ENCODE measurements at regions of chr12 and their contacts with region 1.

Region 1: GRCh38 chr12:76621582-76622024 is 62.0 kb upstream of the OSBPL8 start:
- DNase-seq: peak; percentile 51 to 60
- H3K4me3 ChIP-seq: no peak overlapping the region
- H3K27ac ChIP-seq: no peak overlapping the region
- H3K4me1 ChIP-seq: peaks cover 6% of the 10 kb centered on the region; the same call in 1 of the 2 replicates
- H3K27me3 ChIP-seq: no peaks in the 10 kb centered on the region
- CTCF ChIP-seq: peak; percentile 93

Region 2: GRCh38 chr12:76790564-76791552 is 169.3 kb after region 1 on chr12:
- CTCF ChIA-PET with region 1: no interaction called
- POLR2A ChIA-PET with region 1: no interaction called
- intact Hi-C with region 1: loop called (anchors 1 kb)
- DNase-seq: no peak
- H3K4me3 ChIP-seq: no peak overlapping the region
- H3K27ac ChIP-seq: no peak overlapping the region
- H3K4me1 ChIP-seq: no peaks in the 10 kb centered on the region
- H3K27me3 ChIP-seq: no peaks in the 10 kb centered on the region
- CTCF ChIP-seq: peak; percentile 88

Region 3: GRCh38 chr12:76919383-76920171 is 298.0 kb after region 1 on chr12:
- CTCF ChIA-PET with region 1: no interaction called
- POLR2A ChIA-PET with region 1: no interaction called
- intact Hi-C with region 1: loop called (anchors 10 kb)
- DNase-seq: no peak
- H3K4me3 ChIP-seq: no peak overlapping the region
- H3K27ac ChIP-seq: no peak overlapping the region
- H3K4me1 ChIP-seq: no peaks in the 10 kb centered on the region
- H3K27me3 ChIP-seq: no peaks in the 10 kb centered on the region
- CTCF ChIP-seq: no peak

Region 4: GRCh38 chr12:76997011-76997780 is 375.6 kb after region 1 on chr12:
- CTCF ChIA-PET with region 1: no interaction called
- POLR2A ChIA-PET with region 1: no interaction called
- intact Hi-C with region 1: no loop called
- DNase-seq: no peak
- H3K4me3 ChIP-seq: no peak overlapping the region
- H3K27ac ChIP-seq: no peak overlapping the region
- H3K4me1 ChIP-seq: no peaks in the 10 kb centered on the region
- H3K27me3 ChIP-seq: no peaks in the 10 kb centered on the region
- CTCF ChIP-seq: no peak

Region 5: DNA sequence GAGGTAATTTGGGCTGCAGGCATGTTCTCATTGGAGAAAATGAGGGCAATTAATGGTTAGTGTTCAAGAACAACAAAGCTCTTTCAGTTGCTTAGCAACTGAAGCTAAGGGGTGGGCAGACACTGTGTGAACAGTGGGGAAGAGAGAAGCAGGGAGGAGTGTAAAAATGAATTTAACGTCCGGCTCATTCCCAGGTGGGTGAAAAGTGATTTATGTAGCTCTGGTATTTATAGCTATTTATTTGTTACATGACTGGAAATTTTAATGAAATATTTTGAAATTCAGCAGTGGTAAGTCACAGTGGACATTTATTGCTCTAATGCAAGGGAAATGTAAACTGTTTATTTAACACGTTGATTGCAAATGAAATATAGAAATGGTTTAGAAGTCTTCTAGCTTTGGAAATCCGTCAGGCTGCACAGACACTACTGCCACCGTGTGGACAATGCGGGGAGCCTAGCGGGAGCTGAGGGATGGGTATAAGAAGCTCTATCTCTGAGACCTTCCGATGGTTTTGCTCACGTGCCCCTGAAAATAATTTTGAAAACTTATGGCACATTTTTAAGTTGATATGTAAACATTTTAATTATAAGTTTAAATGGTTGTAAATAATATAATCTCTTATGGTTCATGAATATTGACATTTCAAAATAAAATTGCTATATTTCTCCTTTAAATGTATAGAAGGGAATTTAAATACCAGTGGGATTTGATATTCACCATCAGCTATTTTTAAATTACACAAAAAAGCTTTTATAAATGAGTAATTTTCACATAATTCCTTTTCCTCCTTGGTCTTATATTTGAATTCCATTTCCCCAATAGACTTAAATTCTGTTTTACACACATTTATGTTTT is 389.3 kb after region 1 on chr12:
- CTCF ChIA-PET with region 1: interaction called, 10 read pairs
- POLR2A ChIA-PET with region 1: no interaction called
- intact Hi-C with region 1: loop called (anchors 1 kb)
- DNase-seq: peak; percentile 41 to 62
- H3K4me3 ChIP-seq: no peak overlapping the region
- H3K27ac ChIP-seq: no peak overlapping the region
- H3K4me1 ChIP-seq: no peaks in the 10 kb centered on the region
- H3K27me3 ChIP-seq: no peaks in the 10 kb centered on the region
- CTCF ChIP-seq: peak; percentile 87

Region 6: DNA sequence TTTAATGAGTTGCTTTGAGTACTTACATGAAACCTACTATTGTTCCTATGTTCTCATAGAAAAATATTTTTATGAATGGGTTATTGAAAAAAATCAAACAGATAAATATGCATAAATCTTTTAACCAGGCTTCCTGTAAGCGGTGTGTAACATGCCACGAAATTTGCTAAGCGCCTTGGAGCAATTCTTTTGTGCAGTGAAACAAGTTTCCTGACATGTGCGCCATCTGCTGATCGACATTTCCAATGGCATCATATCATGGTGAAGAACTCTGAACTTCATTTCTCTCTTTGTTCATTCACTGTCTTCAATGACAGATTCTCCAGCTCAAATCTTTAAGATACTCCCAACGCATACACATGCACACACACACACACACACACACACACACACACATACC is 1063.5 kb after region 1 on chr12:
- CTCF ChIA-PET with region 1: no interaction called
- POLR2A ChIA-PET with region 1: no interaction called
- intact Hi-C with region 1: loop called (anchors 5 kb)
- DNase-seq: peak in 1 of 2 experiments; percentile 46
- H3K4me3 ChIP-seq: no peak overlapping the region
- H3K27ac ChIP-seq: no peak overlapping the region
- H3K4me1 ChIP-seq: no peaks in the 10 kb centered on the region
- H3K27me3 ChIP-seq: no peaks in the 10 kb centered on the region
- CTCF ChIP-seq: peak; percentile 68

Measured in PC-9 (cell line).